Activated T-helper 1 cell treated with anti-CD3 and anti-CD28 coated beads, Interleukin-12 subunit alpha, Interleukin-12 subunit beta, Interleukin-2, Interleukin-4 antibody, amounts not matched to agents 30 ng/mL and 10 ng/mL and 1 ng/mL, durations not matched to agents 14 hours and 24 hours and 36 hours (primary cell): ENCODE measurements at regions of chr10 and their contacts with region 1.

Region 1: GRCh38 chr10:98134431-98135221 is at the start of gene R3HCC1L:
- DNase-seq: peak; percentile 93
- H3K4me3 Mint-ChIP-seq: peak within 1 kb of the TSS; percentile 95
- H3K27ac Mint-ChIP-seq: peak within 1 kb of the TSS; percentile 89
- H3K4me1 Mint-ChIP-seq: peaks cover 44% of the 10 kb centered on the region
- H3K27me3 Mint-ChIP-seq: no peaks in the 10 kb centered on the region
- total RNA-seq, gene R3HCC1L: 20.0 and 20.1 TPM in 2 replicates

Region 2: GRCh38 chr10:97640174-97640867 is 494.3 kb before region 1 on chr10 and contains the start of gene PI4K2A:
- intact Hi-C with region 1: loop called (anchors 1 kb)
- DNase-seq: peak; percentile 99
- H3K4me3 Mint-ChIP-seq: peak within 1 kb of the TSS; percentile 96
- H3K27ac Mint-ChIP-seq: peak within 1 kb of the TSS; percentile 86
- H3K4me1 Mint-ChIP-seq: peaks cover 23% of the 10 kb centered on the region
- H3K27me3 Mint-ChIP-seq: peaks cover 1% of the 10 kb centered on the region
- total RNA-seq, gene PI4K2A: 19.3 and 19.7 TPM in 2 replicates

Region 3: DNA sequence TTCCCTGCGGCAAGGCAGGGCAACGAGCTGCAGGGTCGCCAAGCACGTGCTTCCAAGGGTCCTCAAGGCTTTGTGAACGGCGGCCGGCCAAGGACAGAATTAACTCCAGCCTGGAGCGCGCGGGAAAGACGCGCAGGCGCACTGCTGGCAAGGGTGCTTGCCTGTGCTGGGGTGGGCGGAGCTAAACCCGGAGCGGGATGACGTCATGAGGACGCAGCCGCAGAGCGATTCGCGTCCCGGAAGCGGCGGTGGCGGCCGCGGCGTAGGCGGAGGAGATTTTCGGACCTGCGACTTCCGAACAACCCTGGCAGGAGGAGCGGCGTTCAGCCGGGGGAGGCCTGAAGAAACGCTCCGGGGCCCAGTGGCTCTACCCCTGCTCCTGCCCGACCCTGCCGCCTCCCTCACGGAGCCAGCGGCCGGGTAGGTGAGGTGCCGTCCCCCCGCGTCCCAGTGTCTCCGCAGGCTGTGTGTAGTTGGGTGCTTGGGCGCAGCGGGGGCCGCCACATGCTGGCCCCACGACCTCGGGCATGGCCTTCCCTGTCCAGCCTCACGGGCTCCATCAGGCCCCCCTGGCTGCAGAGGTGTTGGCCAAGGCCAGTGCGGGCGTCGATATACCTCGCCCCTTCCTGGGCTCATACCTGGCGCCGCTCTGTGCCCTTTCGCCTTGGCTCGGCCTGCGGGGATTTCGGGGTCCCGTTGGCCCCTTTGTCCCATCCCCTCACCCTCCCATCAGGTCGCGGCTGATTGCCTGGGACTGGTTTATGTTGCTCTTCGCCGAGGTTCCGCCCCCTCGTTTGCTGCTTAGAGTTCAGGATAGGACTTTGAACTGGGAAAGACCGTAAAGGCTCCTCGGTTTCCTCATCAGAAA is 397.5 kb before region 1 on chr10 and contains the start of gene ZFYVE27:
- intact Hi-C with region 1: loop called (anchors 2 kb)
- DNase-seq: peak; percentile 95
- H3K4me3 Mint-ChIP-seq: peak within 1 kb of the TSS; percentile 93
- H3K27ac Mint-ChIP-seq: peak within 1 kb of the TSS; percentile 100
- H3K4me1 Mint-ChIP-seq: peaks cover 44% of the 10 kb centered on the region
- H3K27me3 Mint-ChIP-seq: peaks cover 2% of the 10 kb centered on the region
- total RNA-seq, gene ZFYVE27: 41.7 and 42.5 TPM in 2 replicates

Region 4: DNA sequence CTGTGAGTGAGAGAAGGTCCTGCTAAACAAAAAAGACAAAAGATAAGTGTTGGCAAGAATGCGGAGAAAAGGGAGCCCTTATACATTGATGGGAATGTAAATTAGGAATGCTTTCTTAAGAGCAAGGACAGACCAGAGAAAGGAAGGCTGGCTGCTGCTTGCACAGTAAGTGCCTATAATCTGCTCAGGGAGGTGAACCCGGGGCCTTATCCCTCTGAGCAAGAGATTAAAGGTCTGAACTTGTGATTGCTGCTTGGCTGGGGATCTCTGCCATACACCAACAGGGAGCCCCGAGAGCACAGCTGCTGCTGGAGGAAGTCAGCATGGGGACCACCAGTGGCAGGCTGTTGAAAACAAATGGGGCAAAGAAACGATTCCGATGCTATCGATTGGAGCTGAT is 72.2 kb before region 1 on chr10:
- intact Hi-C with region 1: no loop called
- DNase-seq: no peak
- H3K4me3 Mint-ChIP-seq: no peak overlapping the region
- H3K27ac Mint-ChIP-seq: no peak overlapping the region
- H3K4me1 Mint-ChIP-seq: no peaks in the 10 kb centered on the region
- H3K27me3 Mint-ChIP-seq: peaks cover 1% of the 10 kb centered on the region

Region 5: GRCh38 chr10:98446661-98447221 is 312.1 kb after region 1 on chr10 and contains the start of gene HPS1:
- intact Hi-C with region 1: loop called (anchors 2 kb)
- DNase-seq: peak; percentile 78
- H3K4me3 Mint-ChIP-seq: peak within 1 kb of the TSS; percentile 92
- H3K27ac Mint-ChIP-seq: peak within 1 kb of the TSS; percentile 80
- H3K4me1 Mint-ChIP-seq: peaks cover 30% of the 10 kb centered on the region
- H3K27me3 Mint-ChIP-seq: peaks cover 18% of the 10 kb centered on the region
- total RNA-seq, gene HPS1: 56.1 and 63.1 TPM in 2 replicates

Region 6: DNA sequence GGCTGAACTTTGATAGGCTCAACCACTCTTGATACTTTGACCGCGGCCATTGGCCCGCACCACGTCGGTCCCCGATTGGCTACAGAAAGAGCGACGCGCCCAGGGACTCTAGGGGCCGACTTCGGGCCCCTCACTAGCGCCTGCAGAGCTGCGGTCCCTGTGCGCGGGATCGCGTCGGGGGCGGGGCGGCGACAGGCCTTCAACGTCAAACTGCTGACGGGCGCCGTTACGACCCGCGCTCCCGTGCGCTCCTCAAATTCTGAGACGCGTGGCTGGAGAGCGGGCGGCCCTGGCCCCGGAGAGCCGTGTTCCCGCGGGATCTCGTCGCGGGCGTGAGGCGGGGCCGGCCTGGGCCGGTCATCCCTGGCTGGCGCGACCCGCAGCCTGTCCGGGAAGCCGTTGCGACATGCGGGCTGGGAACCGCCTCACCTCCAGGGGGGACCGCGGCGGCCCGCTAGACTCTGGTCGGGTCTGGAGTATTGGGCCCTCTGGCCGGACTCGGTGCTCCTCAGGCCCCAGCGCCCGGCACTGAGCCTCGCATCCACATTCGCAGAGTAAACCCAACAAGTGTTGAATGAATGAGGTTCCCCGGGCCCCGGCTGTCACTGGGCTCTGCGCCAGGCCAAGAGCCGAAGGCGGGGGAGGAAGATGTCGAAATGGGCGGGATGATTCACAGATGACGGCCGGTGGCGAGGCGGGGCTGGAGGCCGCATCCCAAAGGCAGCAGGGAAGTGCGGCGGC is 1486.3 kb after region 1 on chr10:
- intact Hi-C with region 1: loop called (anchors 10 kb)
- DNase-seq: peak; percentile 91
- H3K4me3 Mint-ChIP-seq: peak overlapping the region; percentile 80
- H3K27ac Mint-ChIP-seq: peak overlapping the region; percentile 97
- H3K4me1 Mint-ChIP-seq: peaks cover 39% of the 10 kb centered on the region
- H3K27me3 Mint-ChIP-seq: no peaks in the 10 kb centered on the region